Activated CD8-positive, alpha-beta T cell treated with anti-CD3 and anti-CD28 coated beads, Interleukin-2, amount 10 ng/mL, durations not matched to agents 7 days and 5 days (primary cell): ENCODE measurements at regions of chr19 and their contacts with region 1.

Region 1: GRCh38 chr19:33416307-33417215 is 43.1 kb downstream of the CEBPG start:
- DNase-seq: peak; percentile 79
- ATAC-seq: peak; percentile 89
- H3K4me3 Mint-ChIP-seq: no peak overlapping the region
- H3K27ac Mint-ChIP-seq: no peak overlapping the region
- H3K4me1 Mint-ChIP-seq: peaks cover 8% of the 10 kb centered on the region
- H3K27me3 Mint-ChIP-seq: no peaks in the 10 kb centered on the region

Region 2: GRCh38 chr19:33771384-33772101 is 355.0 kb after region 1 on chr19:
- CTCF ChIA-PET with region 1: interaction called, 18 read pairs
- POLR2A ChIA-PET with region 1: no interaction called
- DNase-seq: peak; percentile 70
- ATAC-seq: peak; percentile 80
- H3K4me3 Mint-ChIP-seq: no peak overlapping the region
- H3K27ac Mint-ChIP-seq: no peak overlapping the region
- H3K4me1 Mint-ChIP-seq: no peaks in the 10 kb centered on the region
- H3K27me3 Mint-ChIP-seq: no peaks in the 10 kb centered on the region